Lower leg skin (tissue), 4 donors: ENCODE measurements at regions of chr11 and their contacts with region 1.

Region 1: DNA sequence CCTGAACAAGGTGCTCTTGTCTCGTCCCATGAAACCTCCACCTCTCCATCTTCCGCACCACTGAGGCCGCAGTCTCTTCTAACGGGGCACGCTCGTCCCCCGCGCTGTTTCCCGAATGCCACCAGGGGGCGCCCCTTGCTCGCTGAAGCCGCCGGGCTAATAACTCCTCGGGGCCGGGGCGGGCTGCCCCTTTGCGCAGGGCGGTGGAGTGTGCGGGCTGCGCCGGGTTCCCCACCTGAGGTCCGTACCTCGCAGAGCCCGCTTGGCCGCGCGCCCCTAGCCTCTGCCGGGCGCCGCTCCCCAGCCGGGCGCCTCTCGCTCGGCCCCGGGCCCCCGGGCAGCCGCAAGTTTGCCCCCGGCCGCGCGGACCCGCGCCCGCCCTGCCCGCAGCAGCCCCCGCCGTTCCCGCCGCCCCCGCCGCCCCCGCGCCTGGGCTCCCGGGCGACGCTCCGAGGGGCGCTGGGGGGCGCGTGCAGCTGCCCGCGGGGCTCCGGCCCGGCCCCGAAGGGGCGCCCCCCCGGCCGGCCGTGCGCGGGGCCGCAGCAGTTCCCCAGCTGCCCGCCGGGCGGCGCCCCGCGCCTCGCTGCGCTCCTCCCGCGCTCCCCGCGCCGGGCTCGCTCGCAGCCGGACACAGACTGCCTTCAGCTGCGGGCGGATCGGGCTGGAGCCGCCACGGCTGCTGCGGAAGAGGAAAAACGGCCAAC is at the start of gene GRIK4:
- DNase-seq: peak; percentile 58 to 96
- H3K4me3 ChIP-seq: no peak within 1 kb of the TSS
- CTCF ChIP-seq: peak in 1 of 3 donors; percentile 78
- POLR2A ChIP-seq: no peak
- total RNA-seq, gene GRIK4: 0.06 to 0.67 TPM in 2 of 4 donors, not detected in the others

Region 2: GRCh38 chr11:120375076-120375475 is 136.2 kb before region 1 on chr11:
- intact Hi-C with region 1: no loop called
- DNase-seq: no peak
- H3K4me3 ChIP-seq: no peak overlapping the region
- CTCF ChIP-seq: no peak
- POLR2A ChIP-seq: no peak

Region 3: GRCh38 chr11:120532082-120532831 is 21.0 kb after region 1 on chr11:
- intact Hi-C with region 1: no loop called
- DNase-seq: no peak
- H3K4me3 ChIP-seq: no peak overlapping the region
- CTCF ChIP-seq: no peak
- POLR2A ChIP-seq: no peak

Region 4: GRCh38 chr11:120682866-120683265 is 171.6 kb after region 1 on chr11:
- intact Hi-C with region 1: loop called (anchors 10 kb)
- DNase-seq: no peak
- H3K4me3 ChIP-seq: no peak overlapping the region
- CTCF ChIP-seq: no peak
- POLR2A ChIP-seq: no peak

Region 5: DNA sequence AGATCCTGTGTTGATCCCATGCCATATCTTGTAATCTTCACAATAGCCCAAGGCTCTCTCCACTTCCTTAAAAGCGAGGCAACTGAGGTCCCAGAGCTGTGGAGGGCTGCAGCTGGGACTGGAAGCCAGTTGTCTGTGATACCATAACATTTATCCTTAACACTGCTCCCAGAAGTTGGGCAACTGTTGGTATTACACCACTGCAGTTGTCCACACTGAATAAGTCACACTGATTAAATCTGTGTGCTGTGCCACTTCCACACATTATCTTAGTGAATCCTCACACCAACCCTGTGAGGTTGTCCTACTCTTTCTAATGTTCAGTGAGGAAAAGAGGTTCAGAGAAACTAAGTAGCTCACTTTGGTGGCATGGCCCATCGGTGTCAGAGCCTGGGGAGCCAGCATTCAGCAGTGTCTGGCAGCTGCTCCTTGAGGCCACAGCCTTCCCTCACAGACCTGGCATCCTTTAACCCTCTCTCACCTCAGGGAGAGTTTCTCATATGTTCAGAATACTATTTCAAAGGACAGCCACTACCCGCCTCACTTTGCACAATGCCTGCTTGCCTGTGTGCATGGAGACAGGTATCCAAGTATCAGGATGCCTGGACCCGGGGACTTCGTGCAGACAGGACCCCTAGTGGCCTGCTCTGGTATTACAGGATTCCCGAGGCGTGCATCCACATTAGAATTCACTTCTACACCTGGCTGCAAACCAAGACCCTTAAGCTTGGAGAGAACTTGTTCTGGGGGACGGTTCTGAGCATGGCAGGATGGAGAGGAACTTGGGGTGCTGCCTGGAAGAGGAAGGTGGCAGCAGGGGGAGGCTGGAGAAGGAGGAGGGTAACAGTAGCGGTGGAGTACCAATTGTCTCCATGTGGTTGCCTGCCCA is 290.8 kb after region 1 on chr11:
- intact Hi-C with region 1: loop called (anchors 5 kb)
- DNase-seq: peak in 1 of 2 donors; percentile 47
- H3K4me3 ChIP-seq: no peak overlapping the region
- CTCF ChIP-seq: peak in 1 of 3 donors; percentile 50
- POLR2A ChIP-seq: no peak

Region 6: GRCh38 chr11:120929664-120930154 is 418.4 kb after region 1 on chr11:
- intact Hi-C with region 1: no loop called
- DNase-seq: no peak
- H3K4me3 ChIP-seq: no peak overlapping the region
- CTCF ChIP-seq: no peak
- POLR2A ChIP-seq: no peak

Region 7: GRCh38 chr11:120952461-120953434 is 441.5 kb after region 1 on chr11:
- intact Hi-C with region 1: loop called (anchors 5 kb)
- DNase-seq: peak; percentile 57 to 90
- H3K4me3 ChIP-seq: no peak overlapping the region
- CTCF ChIP-seq: no peak
- POLR2A ChIP-seq: no peak

Region 8: DNA sequence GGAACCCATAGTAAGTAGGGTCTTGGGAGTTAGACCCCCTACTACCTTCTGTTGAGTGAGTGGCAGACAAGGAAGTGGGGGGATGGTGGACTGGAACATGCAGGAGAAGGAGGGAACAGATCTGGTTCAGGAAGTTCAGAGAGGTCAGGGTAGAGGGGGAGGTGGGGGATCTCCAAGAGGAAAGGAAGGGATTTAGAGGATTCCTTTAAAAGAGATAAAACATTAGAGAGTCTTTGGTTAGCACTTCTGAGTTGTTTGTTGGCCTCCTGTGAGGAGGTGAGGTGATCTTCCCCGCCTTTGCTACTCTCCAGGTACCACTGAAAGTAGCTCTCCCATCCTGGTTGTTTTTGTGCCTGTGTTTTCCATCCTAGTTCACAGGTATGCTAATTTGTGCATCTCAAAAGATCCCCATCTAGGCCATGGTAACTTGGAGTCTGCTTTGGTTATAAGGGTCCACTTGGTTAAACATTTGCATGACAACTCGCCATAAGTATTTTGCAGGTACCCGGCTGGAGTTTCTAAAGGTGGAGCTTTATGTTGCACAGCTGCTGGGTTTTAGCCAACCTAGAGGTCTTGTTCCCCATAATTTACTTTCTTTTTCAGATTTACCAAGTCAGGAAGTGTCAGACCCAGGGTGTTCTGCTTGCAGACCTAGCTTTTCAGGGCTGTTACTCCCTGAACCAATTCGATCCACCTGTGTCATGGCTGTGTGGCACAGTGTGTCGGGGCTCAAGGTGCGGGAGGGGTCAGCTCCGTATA is 861.6 kb after region 1 on chr11:
- intact Hi-C with region 1: no loop called
- DNase-seq: no peak
- H3K4me3 ChIP-seq: no peak overlapping the region
- CTCF ChIP-seq: no peak
- POLR2A ChIP-seq: no peak